HCT116 (cell line): ENCODE measurements at regions of chr3 and their contacts with region 1.

Region 1: DNA sequence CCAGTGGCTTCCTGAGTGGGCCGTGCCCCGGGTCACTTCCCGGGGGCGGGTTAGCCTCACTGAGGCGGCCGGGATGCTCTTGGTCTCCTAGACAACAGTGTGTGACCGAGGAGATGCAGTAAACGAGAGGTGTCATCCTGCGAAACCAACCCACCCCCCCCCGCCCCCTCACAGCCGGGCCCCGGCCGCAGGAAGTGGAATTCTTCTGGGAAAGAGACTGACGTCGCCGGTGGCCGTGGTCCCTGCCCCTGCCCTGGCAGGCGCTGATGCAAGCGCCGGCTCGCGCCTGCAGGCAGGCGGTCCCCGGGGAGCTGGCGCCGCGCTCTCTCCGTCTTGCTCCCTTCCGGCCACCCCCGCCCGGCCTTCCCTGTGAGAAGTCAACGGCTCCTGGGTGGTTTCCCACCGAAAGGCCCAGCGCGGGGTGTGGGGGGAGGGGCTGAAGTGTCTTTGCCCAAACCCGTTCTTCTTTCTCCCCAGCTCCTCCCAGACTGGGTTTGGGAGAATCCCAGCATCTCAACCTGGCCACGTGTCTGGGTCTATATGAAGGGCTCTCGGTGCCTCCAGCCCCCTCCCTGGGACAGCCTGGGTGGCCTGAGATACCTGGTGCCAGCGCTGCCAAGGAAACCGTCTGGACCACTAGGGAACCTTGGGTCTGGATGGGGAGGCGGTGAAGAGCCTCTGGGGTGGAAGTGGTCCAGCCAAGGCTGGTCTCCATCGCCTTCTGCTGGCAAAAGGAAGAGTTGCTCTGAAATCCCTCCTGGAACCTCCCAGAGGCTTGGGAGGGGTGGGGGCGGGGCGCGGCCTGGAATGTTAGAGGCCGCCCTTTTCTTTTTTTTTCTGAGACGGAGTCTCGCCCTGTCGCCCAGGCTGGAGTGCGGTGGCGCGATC is 47.3 kb downstream of the BHLHE40 start:
- DNase-seq: peak; percentile 92
- ATAC-seq: peak; percentile 81
- H3K4me3 ChIP-seq: peak overlapping the region; percentile 44 to 54
- H3K27ac ChIP-seq: peak overlapping the region; percentile 31; the same call in 1 of the 2 replicates
- H3K4me1 ChIP-seq: peaks cover 39 to 58% of the 10 kb centered on the region in 2 experiments
- H3K27me3 ChIP-seq: no peaks in the 10 kb centered on the region
- CTCF ChIP-seq: peak in 2 of 3 experiments; percentile 63 to 67; a peak in 4 of 6 replicates
- POLR2A ChIP-seq: no peak
- RAD21 ChIP-seq: no peak

Region 2: GRCh38 chr3:4623421-4623999 is 403.1 kb before region 1 on chr3:
- CTCF ChIA-PET with region 1: no interaction called
- POLR2A ChIA-PET with region 1: no interaction called
- RAD21 ChIA-PET with region 1: no interaction called
- intact Hi-C with region 1: no loop called
- DNase-seq: no peak
- ATAC-seq: no peak
- H3K4me3 ChIP-seq: no peak overlapping the region
- H3K27ac ChIP-seq: no peak overlapping the region
- H3K4me1 ChIP-seq: no peaks in the 10 kb centered on the region
- H3K27me3 ChIP-seq: no peaks in the 10 kb centered on the region
- CTCF ChIP-seq: no peak
- POLR2A ChIP-seq: no peak
- RAD21 ChIP-seq: no peak

Region 3: DNA sequence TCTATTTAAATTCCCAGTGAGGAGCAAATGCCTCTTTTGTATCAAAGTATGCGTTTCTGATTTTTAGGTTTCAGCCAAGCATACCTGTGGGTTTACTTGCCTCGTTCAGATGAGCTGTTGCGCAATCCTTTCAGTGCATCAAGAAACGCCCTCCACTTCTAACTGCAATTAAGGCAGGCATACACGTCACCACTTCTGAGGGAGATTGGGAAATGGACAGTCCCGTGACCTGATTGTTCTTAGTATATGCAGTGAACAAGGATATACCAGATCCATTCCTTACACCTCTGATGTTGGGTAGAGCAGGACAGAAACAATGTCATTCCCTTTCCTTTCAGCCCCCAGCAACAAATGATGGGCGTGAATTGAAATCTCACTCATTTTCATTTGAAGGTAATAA is 314.4 kb before region 1 on chr3:
- CTCF ChIA-PET with region 1: interaction called, 28 read pairs
- POLR2A ChIA-PET with region 1: interaction called, 3 read pairs
- RAD21 ChIA-PET with region 1: interaction called, 5 to 6 read pairs
- intact Hi-C with region 1: loop called (anchors 1 kb)
- DNase-seq: peak; percentile 21
- ATAC-seq: no peak
- H3K4me3 ChIP-seq: no peak overlapping the region
- H3K27ac ChIP-seq: no peak overlapping the region
- H3K4me1 ChIP-seq: peaks cover 8% of the 10 kb centered on the region in 2 experiments; a peak in 2 of 4 replicates
- H3K27me3 ChIP-seq: no peaks in the 10 kb centered on the region
- CTCF ChIP-seq: no peak
- POLR2A ChIP-seq: no peak
- RAD21 ChIP-seq: no peak

Region 4: GRCh38 chr3:4722103-4722502 is 304.5 kb before region 1 on chr3:
- CTCF ChIA-PET with region 1: interaction called, 7 read pairs
- POLR2A ChIA-PET with region 1: interaction called, 3 read pairs
- RAD21 ChIA-PET with region 1: interaction called in 1 of 2 experiments, 3 read pairs
- intact Hi-C with region 1: loop called (anchors 1 kb)
- DNase-seq: peak; percentile 68
- ATAC-seq: peak; percentile 87
- H3K4me3 ChIP-seq: no peak overlapping the region
- H3K27ac ChIP-seq: no peak overlapping the region
- H3K4me1 ChIP-seq: peaks cover 16 to 30% of the 10 kb centered on the region in 2 experiments; a peak in 3 of 4 replicates
- H3K27me3 ChIP-seq: no peaks in the 10 kb centered on the region
- CTCF ChIP-seq: peak; percentile 47 to 91 (median 60)
- POLR2A ChIP-seq: no peak
- RAD21 ChIP-seq: peak; percentile 97

Region 5: DNA sequence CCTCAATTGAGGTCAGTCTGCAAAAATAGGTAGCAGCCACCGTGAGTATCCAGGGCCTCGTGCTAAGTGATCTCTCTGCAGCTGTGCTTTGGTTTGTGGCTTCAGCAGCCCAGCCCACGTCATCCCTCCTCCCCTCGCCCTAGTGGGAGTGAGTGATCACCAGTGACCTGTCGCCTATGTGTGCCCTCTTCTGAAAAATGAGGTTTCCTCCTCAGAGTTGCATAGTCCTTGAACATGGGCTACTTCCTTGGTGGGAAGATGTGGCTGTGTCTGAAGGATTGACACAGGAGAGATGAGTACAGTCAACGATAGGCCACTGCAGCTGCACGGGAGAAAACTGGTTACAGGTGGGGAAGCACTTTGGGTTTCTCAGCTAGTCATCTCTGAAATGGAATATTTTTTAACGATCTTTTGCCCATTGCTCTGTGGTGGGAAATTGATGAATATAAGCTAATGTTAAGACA is 192.1 kb before region 1 on chr3:
- CTCF ChIA-PET with region 1: no interaction called
- POLR2A ChIA-PET with region 1: interaction called, 5 read pairs
- RAD21 ChIA-PET with region 1: no interaction called
- intact Hi-C with region 1: loop called (anchors 10 kb)
- DNase-seq: no peak
- ATAC-seq: no peak
- H3K4me3 ChIP-seq: no peak overlapping the region
- H3K27ac ChIP-seq: no peak overlapping the region
- H3K4me1 ChIP-seq: peaks cover 0 to 14% of the 10 kb centered on the region in 2 experiments; a peak in 1 of 4 replicates
- H3K27me3 ChIP-seq: no peaks in the 10 kb centered on the region
- CTCF ChIP-seq: no peak
- POLR2A ChIP-seq: no peak
- RAD21 ChIP-seq: no peak

Region 6: GRCh38 chr3:4986782-4987537 is 39.6 kb before region 1 on chr3:
- CTCF ChIA-PET with region 1: interaction called, 4 read pairs
- POLR2A ChIA-PET with region 1: interaction called, 39 read pairs
- RAD21 ChIA-PET with region 1: interaction called in 1 of 2 experiments, 3 read pairs
- intact Hi-C with region 1: loop called (anchors 1 kb)
- DNase-seq: peak; percentile 98
- ATAC-seq: peak; percentile 84
- H3K4me3 ChIP-seq: peak overlapping the region; percentile 17 to 48; a peak in 3 of 4 replicates
- H3K27ac ChIP-seq: peak overlapping the region; percentile 46
- H3K4me1 ChIP-seq: peaks cover 64 to 88% of the 10 kb centered on the region in 2 experiments
- H3K27me3 ChIP-seq: no peaks in the 10 kb centered on the region
- CTCF ChIP-seq: no peak
- POLR2A ChIP-seq: no peak
- RAD21 ChIP-seq: no peak

Region 7: GRCh38 chr3:4994823-4995499 is 31.6 kb before region 1 on chr3:
- CTCF ChIA-PET with region 1: no interaction called
- POLR2A ChIA-PET with region 1: interaction called, 13 read pairs
- RAD21 ChIA-PET with region 1: no interaction called
- intact Hi-C with region 1: no loop called
- DNase-seq: peak; percentile 94
- ATAC-seq: peak; percentile 81
- H3K4me3 ChIP-seq: peak overlapping the region in 1 of 2 experiments; percentile 27; a peak in 1 of 4 replicates
- H3K27ac ChIP-seq: peak overlapping the region; percentile 85
- H3K4me1 ChIP-seq: peaks cover 36 to 69% of the 10 kb centered on the region in 2 experiments
- H3K27me3 ChIP-seq: no peaks in the 10 kb centered on the region
- CTCF ChIP-seq: no peak
- POLR2A ChIP-seq: no peak
- RAD21 ChIP-seq: no peak

Region 8: DNA sequence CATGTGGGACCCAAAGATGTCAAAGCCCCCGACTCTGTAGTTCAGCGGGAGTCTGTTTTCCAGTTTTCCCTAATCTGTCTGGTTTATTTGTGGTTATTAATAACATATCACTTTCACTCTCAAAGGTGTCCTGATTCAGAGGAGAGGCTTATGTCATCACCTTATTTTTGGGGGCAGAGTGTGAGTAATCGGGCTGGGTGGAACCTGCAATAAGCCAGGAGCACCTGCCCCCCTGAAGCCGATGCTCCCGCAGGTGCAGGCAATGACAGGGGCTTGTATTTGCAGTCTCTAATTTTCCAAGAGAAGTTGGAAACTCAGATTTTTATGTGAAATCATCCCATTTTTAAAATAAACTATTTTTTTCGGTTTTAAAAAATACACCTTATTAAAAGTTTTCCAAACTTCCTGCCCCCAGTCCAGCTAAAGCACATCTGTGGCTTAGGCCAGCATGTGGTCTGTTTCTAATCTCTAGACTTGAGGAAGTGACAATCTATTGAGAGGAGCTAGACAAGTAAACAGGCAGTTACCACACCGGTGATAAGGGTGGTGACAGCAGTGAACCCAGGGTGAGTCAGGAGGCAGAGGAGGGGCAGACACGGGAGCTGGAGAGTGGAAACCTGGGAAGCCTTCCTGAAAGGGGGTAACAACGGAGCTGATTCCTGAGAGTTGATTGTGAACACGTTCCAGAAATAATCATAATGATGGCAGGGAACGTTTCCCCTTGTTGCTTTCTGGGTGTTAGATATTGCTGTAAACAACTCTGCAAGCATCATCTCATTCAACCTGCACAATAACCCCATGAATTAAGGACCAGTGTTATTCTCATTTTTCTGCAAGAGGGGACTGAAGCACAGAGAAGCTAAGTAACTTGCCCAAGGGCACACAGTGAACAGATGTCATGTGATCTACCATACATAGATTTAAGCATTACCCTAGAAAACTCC is 10.1 kb before region 1 on chr3:
- CTCF ChIA-PET with region 1: interaction called, 5 read pairs
- POLR2A ChIA-PET with region 1: interaction called, 22 read pairs
- RAD21 ChIA-PET with region 1: no interaction called
- intact Hi-C with region 1: no loop called
- DNase-seq: peak; percentile 72
- ATAC-seq: peak; percentile 50
- H3K4me3 ChIP-seq: peak overlapping the region in 1 of 2 experiments; percentile 9; a peak in 1 of 4 replicates
- H3K27ac ChIP-seq: peak overlapping the region; percentile 1; the same call in 1 of the 2 replicates
- H3K4me1 ChIP-seq: peaks cover 61 to 99% of the 10 kb centered on the region in 2 experiments
- H3K27me3 ChIP-seq: no peaks in the 10 kb centered on the region
- CTCF ChIP-seq: no peak
- POLR2A ChIP-seq: no peak
- RAD21 ChIP-seq: no peak

Region 9: GRCh38 chr3:5317557-5317956 is 291.0 kb after region 1 on chr3:
- CTCF ChIA-PET with region 1: no interaction called
- POLR2A ChIA-PET with region 1: no interaction called
- RAD21 ChIA-PET with region 1: no interaction called
- intact Hi-C with region 1: no loop called
- DNase-seq: no peak
- ATAC-seq: no peak
- H3K4me3 ChIP-seq: no peak overlapping the region
- H3K27ac ChIP-seq: no peak overlapping the region
- H3K4me1 ChIP-seq: no peaks in the 10 kb centered on the region
- H3K27me3 ChIP-seq: no peaks in the 10 kb centered on the region
- CTCF ChIP-seq: no peak
- POLR2A ChIP-seq: no peak
- RAD21 ChIP-seq: no peak